ENCODE measurements at regions of chr10 and their contacts with region 1.

Region 1: GRCh38 chr10:69146759-69147158 is 22.8 kb downstream of the VPS26A start:
- DNase-seq: no peak
- H3K4me3 ChIP-seq: no peak overlapping the region
- H3K27ac ChIP-seq: no peak overlapping the region
- H3K4me1 ChIP-seq: no peaks in the 10 kb centered on the region
- H3K27me3 ChIP-seq: no peaks in the 10 kb centered on the region
- CTCF ChIP-seq: no peak

Region 2: GRCh38 chr10:67903581-67903980 is 1243.2 kb before region 1 on chr10:
- CTCF ChIA-PET with region 1: no interaction called
- POLR2A ChIA-PET with region 1: interaction called, 33 read pairs
- intact Hi-C with region 1: no loop called
- DNase-seq: no peak
- H3K4me3 ChIP-seq: no peak overlapping the region
- H3K27ac ChIP-seq: no peak overlapping the region
- H3K4me1 ChIP-seq: no peaks in the 10 kb centered on the region
- H3K27me3 ChIP-seq: no peaks in the 10 kb centered on the region
- CTCF ChIP-seq: no peak

Region 3: DNA sequence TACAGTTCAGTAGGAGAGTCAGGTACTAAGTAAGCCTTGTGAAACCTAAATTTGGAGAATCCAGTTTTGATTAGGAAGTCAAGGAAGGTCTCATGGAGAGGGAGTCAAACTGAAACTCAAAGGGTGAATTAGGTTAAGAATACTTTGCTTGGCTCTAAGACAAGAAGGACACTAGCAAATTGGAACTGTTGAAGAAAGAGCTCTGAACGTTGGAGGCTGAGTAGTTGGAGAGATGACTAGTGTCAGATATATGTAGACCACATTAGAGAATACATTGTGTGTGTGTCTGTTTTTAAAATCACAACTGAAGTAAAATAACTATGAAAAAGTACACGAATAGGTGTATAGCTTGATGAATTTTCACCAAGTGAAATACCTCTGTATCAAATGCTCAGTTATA is 16.5 kb before region 1 on chr10:
- CTCF ChIA-PET with region 1: no interaction called
- POLR2A ChIA-PET with region 1: no interaction called
- intact Hi-C with region 1: no loop called
- DNase-seq: no peak
- H3K4me3 ChIP-seq: no peak overlapping the region
- H3K27ac ChIP-seq: no peak overlapping the region
- H3K4me1 ChIP-seq: no peaks in the 10 kb centered on the region
- H3K27me3 ChIP-seq: no peaks in the 10 kb centered on the region
- CTCF ChIP-seq: no peak

Region 4: GRCh38 chr10:69383558-69383957 is 236.8 kb after region 1 on chr10:
- CTCF ChIA-PET with region 1: no interaction called
- POLR2A ChIA-PET with region 1: no interaction called
- intact Hi-C with region 1: no loop called
- DNase-seq: no peak
- H3K4me3 ChIP-seq: no peak overlapping the region
- H3K27ac ChIP-seq: no peak overlapping the region
- H3K4me1 ChIP-seq: no peaks in the 10 kb centered on the region
- H3K27me3 ChIP-seq: no peaks in the 10 kb centered on the region
- CTCF ChIP-seq: no peak

Measured in A673 (cell line).